ENCODE measurements at regions of chr7 and their contacts with region 1.

Region 1: GRCh38 chr7:150448789-150449147 is 1.7 kb upstream of the GIMAP8 start:
- DNase-seq: peak; percentile 94
- ATAC-seq: peak; percentile 60
- H3K4me3 Mint-ChIP-seq: peak overlapping the region; percentile 32
- H3K27ac Mint-ChIP-seq: peak overlapping the region; percentile 98
- H3K4me1 Mint-ChIP-seq: peaks cover 55% of the 10 kb centered on the region
- H3K27me3 Mint-ChIP-seq: no peaks in the 10 kb centered on the region

Region 2: GRCh38 chr7:150404805-150405583 is 43.8 kb before region 1 on chr7:
- CTCF ChIA-PET with region 1: interaction called, 12 read pairs
- DNase-seq: peak; percentile 87
- ATAC-seq: peak; percentile 79
- H3K4me3 Mint-ChIP-seq: peak overlapping the region; percentile 97
- H3K27ac Mint-ChIP-seq: peak overlapping the region; percentile 94
- H3K4me1 Mint-ChIP-seq: peaks cover 36% of the 10 kb centered on the region
- H3K27me3 Mint-ChIP-seq: no peaks in the 10 kb centered on the region

Region 3: DNA sequence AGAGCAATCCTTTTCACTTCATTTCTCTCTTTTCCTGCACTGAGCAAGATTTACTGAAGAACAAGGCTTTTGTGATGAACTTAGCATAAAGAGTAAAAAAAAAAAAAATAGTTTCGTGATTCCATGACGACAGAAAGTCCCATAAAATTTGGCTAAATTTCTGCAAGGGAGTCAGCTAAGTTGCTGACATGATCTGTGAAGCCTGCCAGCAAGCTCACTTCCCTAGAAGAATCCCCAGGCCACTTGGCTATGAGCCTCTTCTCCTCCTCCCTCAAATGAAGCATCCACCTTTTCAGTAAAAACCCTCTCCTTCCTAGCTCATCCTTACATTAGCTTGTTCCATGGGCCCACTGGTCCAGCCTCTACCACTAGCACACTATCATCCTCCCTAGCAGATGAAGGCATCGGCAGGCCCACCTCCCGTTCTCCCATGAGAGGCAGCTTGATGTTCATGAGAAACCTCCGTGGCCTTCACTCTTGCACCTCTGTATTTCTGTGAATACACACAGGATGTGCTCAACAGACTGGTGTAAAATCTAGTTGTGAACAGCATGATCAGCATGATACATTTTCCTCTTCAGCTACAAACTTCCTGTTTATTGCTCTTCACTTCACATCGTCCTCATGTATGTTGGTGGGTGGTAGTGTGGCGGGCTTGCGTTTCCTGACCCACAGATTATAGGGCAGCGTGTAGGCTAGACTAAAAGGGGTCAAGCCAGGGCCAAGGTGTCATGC is 32.6 kb after region 1 on chr7:
- CTCF ChIA-PET with region 1: interaction called, 34 read pairs
- DNase-seq: peak; percentile 82
- ATAC-seq: peak; percentile 87
- H3K4me3 Mint-ChIP-seq: peak overlapping the region; percentile 67
- H3K27ac Mint-ChIP-seq: peak overlapping the region; percentile 99
- H3K4me1 Mint-ChIP-seq: peaks cover 82% of the 10 kb centered on the region
- H3K27me3 Mint-ChIP-seq: no peaks in the 10 kb centered on the region

Region 4: GRCh38 chr7:150514748-150515222 is 66.0 kb after region 1 on chr7 and contains the start of gene GIMAP7:
- CTCF ChIA-PET with region 1: interaction called, 69 read pairs
- DNase-seq: peak; percentile 83
- ATAC-seq: peak; percentile 74
- H3K4me3 Mint-ChIP-seq: peak within 1 kb of the TSS; percentile 100
- H3K27ac Mint-ChIP-seq: peak within 1 kb of the TSS; percentile 99
- H3K4me1 Mint-ChIP-seq: peaks cover 49% of the 10 kb centered on the region
- H3K27me3 Mint-ChIP-seq: no peaks in the 10 kb centered on the region
- total RNA-seq, gene GIMAP7: 49.9 to 89.7 TPM

Region 5: GRCh38 chr7:150556521-150557138 is 107.9 kb after region 1 on chr7:
- CTCF ChIA-PET with region 1: no interaction called
- DNase-seq: peak; percentile 70
- ATAC-seq: peak; percentile 99
- H3K4me3 Mint-ChIP-seq: peak overlapping the region; percentile 48
- H3K27ac Mint-ChIP-seq: peak overlapping the region; percentile 91
- H3K4me1 Mint-ChIP-seq: peaks cover 28% of the 10 kb centered on the region
- H3K27me3 Mint-ChIP-seq: no peaks in the 10 kb centered on the region

Region 6: GRCh38 chr7:150620617-150621371 is 172.0 kb after region 1 on chr7:
- CTCF ChIA-PET with region 1: interaction called, 12 read pairs
- DNase-seq: no peak
- ATAC-seq: peak; percentile 58
- H3K4me3 Mint-ChIP-seq: peak overlapping the region; percentile 3
- H3K27ac Mint-ChIP-seq: peak overlapping the region; percentile 78
- H3K4me1 Mint-ChIP-seq: peaks cover 50% of the 10 kb centered on the region
- H3K27me3 Mint-ChIP-seq: no peaks in the 10 kb centered on the region

Region 7: GRCh38 chr7:150716368-150716767 is 267.6 kb after region 1 on chr7 and contains the start of gene GIMAP1:
- CTCF ChIA-PET with region 1: interaction called, 41 read pairs
- DNase-seq: peak; percentile 74
- ATAC-seq: peak; percentile 78
- H3K4me3 Mint-ChIP-seq: peak within 1 kb of the TSS; percentile 85
- H3K27ac Mint-ChIP-seq: peak within 1 kb of the TSS; percentile 92
- H3K4me1 Mint-ChIP-seq: peaks cover 51% of the 10 kb centered on the region
- H3K27me3 Mint-ChIP-seq: no peaks in the 10 kb centered on the region
- total RNA-seq, gene GIMAP1: 6.8 to 12.4 TPM

Region 8: GRCh38 chr7:150753826-150754603 is 305.2 kb after region 1 on chr7:
- CTCF ChIA-PET with region 1: interaction called, 112 read pairs
- DNase-seq: no peak
- ATAC-seq: peak; percentile 45
- H3K4me3 Mint-ChIP-seq: no peak overlapping the region
- H3K27ac Mint-ChIP-seq: peak overlapping the region; percentile 97
- H3K4me1 Mint-ChIP-seq: peaks cover 58% of the 10 kb centered on the region
- H3K27me3 Mint-ChIP-seq: no peaks in the 10 kb centered on the region

Measured in activated CD8-positive, alpha-beta memory T cell treated with anti-CD3 and anti-CD28 coated beads, Interleukin-2, amount 10 ng/mL, durations not matched to agents 7 days and 5 days (primary cell).